Activated T-helper 2 cell treated with anti-CD3 and anti-CD28 coated beads, Interferon-gamma antibody, Interleukin-2, Interleukin-4, amounts not matched to agents 10 μg/mL and 5 μg/mL and 100 μg/mL, durations not matched to agents 14 hours and 24 hours and 36 hours (primary cell): ENCODE measurements at regions of chr14 and their contacts with region 1.

Region 1: DNA sequence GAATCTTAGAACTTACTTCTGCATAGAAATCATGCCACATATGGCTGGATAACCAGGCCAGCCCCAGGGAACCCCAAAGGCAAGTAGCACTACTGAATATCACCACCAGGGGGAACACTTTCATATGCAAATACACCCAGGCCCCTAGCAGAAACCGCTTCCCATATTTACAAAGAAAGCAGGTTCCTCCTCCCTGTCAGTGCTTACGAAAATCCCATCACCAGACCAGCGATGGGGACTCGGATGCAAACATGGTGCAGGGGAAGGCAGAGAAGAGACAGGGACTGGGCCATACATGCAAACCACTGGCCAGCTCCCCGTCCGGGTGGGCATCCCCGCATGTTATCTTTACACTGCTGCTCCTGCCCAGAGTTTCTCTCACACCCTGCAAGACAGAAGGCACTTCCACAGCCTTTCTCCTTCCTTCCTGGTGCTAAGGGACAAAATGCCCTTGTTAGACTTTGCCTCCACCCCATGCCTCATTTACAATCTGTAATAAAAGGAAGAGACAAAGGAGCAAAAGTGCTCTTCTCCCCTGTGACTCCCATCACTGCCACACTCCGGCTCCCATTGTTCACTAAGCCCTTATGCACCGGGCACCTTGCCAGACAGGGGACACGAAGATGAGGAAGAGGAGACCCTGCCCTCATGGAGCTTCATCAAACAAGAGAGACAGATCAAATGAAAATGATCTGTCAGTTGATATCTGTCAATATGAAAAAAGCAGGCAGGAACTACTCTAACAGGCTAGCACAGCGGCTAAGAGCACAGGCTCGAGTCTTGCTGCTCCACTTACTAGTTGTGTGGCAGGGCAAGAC is 62.3 kb downstream of the PTPN21 start:
- DNase-seq: peak; percentile 50
- H3K4me3 Mint-ChIP-seq: no peak overlapping the region
- H3K27ac Mint-ChIP-seq: no peak overlapping the region
- H3K4me1 Mint-ChIP-seq: peaks cover 4% of the 10 kb centered on the region
- H3K27me3 Mint-ChIP-seq: peaks cover 4% of the 10 kb centered on the region

Region 2: GRCh38 chr14:88225721-88226120 is 266.8 kb before region 1 on chr14:
- intact Hi-C with region 1: no loop called
- DNase-seq: no peak
- H3K4me3 Mint-ChIP-seq: no peak overlapping the region
- H3K27ac Mint-ChIP-seq: no peak overlapping the region
- H3K4me1 Mint-ChIP-seq: peaks cover 3% of the 10 kb centered on the region
- H3K27me3 Mint-ChIP-seq: no peaks in the 10 kb centered on the region

Region 3: GRCh38 chr14:88551094-88551870 is 58.8 kb after region 1 on chr14:
- intact Hi-C with region 1: loop called (anchors 2 kb)
- DNase-seq: no peak
- H3K4me3 Mint-ChIP-seq: peak overlapping the region; percentile 69
- H3K27ac Mint-ChIP-seq: no peak overlapping the region
- H3K4me1 Mint-ChIP-seq: peaks cover 14% of the 10 kb centered on the region
- H3K27me3 Mint-ChIP-seq: peaks cover 38% of the 10 kb centered on the region

Region 4: GRCh38 chr14:88599761-88600439 is 107.4 kb after region 1 on chr14:
- intact Hi-C with region 1: loop called (anchors 5 kb)
- DNase-seq: no peak
- H3K4me3 Mint-ChIP-seq: peak overlapping the region; percentile 56
- H3K27ac Mint-ChIP-seq: peak overlapping the region; percentile 80
- H3K4me1 Mint-ChIP-seq: peaks cover 44% of the 10 kb centered on the region
- H3K27me3 Mint-ChIP-seq: no peaks in the 10 kb centered on the region